Activated CD8-positive, alpha-beta T cell treated with anti-CD3 and anti-CD28 coated beads, Interleukin-2, amount 10 ng/mL, durations not matched to agents 7 days and 5 days (primary cell): ENCODE measurements at regions of chr7 and their contacts with region 1.

Region 1: DNA sequence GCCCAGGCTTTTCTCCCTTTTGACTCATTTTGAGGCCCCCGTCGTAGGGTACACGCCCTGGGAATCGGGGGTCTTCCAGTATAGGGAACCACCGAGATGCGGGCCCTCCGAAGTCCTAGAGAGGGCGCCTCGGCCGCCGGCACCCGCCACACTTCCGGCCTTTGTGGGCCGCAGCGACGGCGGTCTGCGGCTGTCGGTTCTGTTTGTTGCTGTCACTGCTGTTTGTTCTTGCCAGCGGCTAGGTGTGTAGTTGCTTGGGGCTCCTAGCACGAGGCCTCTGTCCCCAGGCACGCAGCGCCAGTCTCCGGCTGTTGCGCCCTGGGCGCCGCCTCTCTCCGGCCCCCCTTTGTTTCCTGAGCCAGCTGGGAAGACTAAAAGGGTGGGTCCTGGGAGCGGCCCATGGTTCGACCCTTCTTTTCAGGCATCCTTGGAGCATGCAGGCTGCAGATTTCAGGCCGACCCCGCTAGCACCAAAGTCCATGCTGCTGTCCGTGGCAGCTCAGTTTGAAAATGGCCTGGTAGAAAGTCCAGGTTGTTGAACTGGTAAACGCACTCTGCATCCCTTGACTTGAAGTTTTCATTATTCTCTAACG is 17.8 kb upstream of the ZKSCAN1 start:
- DNase-seq: peak; percentile 86
- ATAC-seq: peak; percentile 97
- H3K4me3 Mint-ChIP-seq: peak overlapping the region; percentile 69
- H3K27ac Mint-ChIP-seq: peak overlapping the region; percentile 87
- H3K4me1 Mint-ChIP-seq: peaks cover 24% of the 10 kb centered on the region
- H3K27me3 Mint-ChIP-seq: peaks cover 8% of the 10 kb centered on the region

Region 2: GRCh38 chr7:100015232-100016209 is 17.9 kb after region 1 on chr7 and contains the start of gene ZKSCAN1:
- CTCF ChIA-PET with region 1: interaction called, 36 read pairs
- POLR2A ChIA-PET with region 1: interaction called, 17 read pairs
- DNase-seq: peak; percentile 90
- ATAC-seq: peak; percentile 98
- H3K4me3 Mint-ChIP-seq: peak within 1 kb of the TSS; percentile 92
- H3K27ac Mint-ChIP-seq: peak within 1 kb of the TSS; percentile 95
- H3K4me1 Mint-ChIP-seq: peaks cover 50% of the 10 kb centered on the region
- H3K27me3 Mint-ChIP-seq: no peaks in the 10 kb centered on the region
- total RNA-seq, gene ZKSCAN1: 50.4 to 54.5 TPM

Region 3: DNA sequence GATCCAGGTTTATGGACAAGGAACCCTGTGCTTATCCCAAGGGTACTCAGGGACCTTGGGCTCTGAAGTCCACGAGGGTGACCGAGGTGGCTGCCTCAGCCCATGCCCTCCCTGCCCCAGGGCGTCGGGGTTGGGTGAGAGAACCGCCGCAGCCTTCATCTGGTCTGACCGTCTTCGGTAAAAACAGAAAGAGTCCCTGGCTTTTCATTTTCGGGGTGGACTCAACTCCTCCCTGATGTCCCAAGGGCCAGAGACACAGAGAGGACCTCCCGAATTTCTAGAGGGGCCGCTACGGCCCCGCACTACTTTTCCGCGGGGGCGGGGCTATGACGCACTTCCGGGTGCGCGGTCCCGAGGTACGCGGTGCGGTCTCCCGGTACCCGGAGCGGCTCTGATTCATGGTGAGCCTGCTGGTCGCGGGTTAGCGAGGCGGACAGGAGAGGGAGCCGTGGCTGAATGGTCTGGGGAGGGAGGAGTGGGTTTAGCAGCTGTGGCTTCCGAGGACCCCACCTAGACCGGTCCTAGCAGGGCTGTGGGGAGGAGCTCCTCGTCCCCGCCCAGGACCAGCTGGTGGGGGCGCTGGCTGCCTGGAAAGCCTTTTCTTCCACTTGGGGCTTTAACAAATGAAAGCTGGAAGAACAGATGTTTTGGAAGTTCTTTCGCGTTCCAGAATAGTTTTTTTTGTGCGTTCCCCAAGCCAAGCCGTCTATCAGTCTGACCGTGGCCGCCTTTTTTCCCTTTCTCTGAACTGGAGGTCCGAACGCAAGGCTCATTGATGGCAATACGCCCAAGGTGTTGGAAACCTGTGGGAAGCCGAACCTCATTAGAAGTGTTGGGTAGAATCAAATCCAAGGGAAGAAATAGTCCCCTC is 52.0 kb after region 1 on chr7 and contains the start of gene ZSCAN21:
- CTCF ChIA-PET with region 1: interaction called, 26 read pairs
- POLR2A ChIA-PET with region 1: no interaction called
- DNase-seq: peak; percentile 81
- ATAC-seq: peak; percentile 89
- H3K4me3 Mint-ChIP-seq: peak within 1 kb of the TSS; percentile 87
- H3K27ac Mint-ChIP-seq: peak within 1 kb of the TSS; percentile 95
- H3K4me1 Mint-ChIP-seq: peaks cover 17% of the 10 kb centered on the region
- H3K27me3 Mint-ChIP-seq: no peaks in the 10 kb centered on the region
- total RNA-seq, gene ZSCAN21: 5.8 to 7.5 TPM

Region 4: DNA sequence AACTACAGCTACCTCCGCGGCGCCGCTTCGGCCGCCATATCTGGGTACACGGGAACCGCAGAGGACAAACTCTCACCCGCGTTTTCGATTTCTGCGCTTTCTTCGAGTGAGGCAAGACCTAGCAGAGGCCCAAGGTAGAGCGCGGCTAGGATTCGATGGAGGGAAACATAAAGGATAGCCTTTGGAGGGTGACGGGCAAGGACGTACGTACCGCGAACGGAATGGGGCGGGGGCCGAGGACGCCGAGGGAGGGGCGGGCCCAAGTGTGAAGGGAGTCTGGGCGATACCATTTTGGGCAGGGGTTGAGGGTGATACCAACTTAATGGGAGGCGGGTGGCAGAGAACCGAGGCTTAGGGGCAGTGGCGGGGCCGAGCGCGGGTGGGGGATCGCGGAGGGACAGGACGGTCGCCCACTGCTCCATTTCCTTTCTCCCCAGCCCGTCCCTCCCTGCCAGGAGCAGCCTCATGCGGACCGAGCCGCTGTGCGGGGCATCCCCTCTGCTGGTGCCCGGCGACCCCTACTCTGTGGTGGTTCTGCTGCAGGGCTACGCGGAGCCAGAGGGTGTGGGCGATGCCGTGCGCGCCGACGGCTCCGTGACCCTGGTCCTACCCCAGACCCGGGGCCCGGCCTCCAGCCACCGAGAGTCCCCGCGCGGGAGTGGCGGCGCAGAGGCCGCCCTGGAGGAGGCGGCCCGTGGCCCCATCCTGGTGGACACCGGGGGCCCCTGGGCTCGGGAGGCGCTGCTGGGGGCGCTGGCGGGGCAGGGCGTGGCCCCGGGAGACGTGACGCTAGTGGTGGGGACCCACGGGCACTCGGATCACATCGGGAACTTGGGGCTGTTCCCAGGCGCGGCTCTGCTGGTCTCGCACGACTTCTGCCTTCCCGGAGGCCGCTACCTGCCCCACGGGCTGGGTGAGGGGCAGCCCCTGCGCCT is 129.6 kb after region 1 on chr7 and contains the start of gene MBLAC1:
- CTCF ChIA-PET with region 1: interaction called, 42 read pairs
- POLR2A ChIA-PET with region 1: no interaction called
- DNase-seq: peak; percentile 95
- ATAC-seq: peak; percentile 72
- H3K4me3 Mint-ChIP-seq: peak within 1 kb of the TSS; percentile 98
- H3K27ac Mint-ChIP-seq: peak within 1 kb of the TSS; percentile 100
- H3K4me1 Mint-ChIP-seq: peaks cover 49% of the 10 kb centered on the region
- H3K27me3 Mint-ChIP-seq: no peaks in the 10 kb centered on the region
- total RNA-seq, gene MBLAC1: 4.3 to 5.7 TPM